Sciatic nerve (tissue), 2 donors: ENCODE measurements at regions of chr2 and their contacts with region 1.

Region 1: DNA sequence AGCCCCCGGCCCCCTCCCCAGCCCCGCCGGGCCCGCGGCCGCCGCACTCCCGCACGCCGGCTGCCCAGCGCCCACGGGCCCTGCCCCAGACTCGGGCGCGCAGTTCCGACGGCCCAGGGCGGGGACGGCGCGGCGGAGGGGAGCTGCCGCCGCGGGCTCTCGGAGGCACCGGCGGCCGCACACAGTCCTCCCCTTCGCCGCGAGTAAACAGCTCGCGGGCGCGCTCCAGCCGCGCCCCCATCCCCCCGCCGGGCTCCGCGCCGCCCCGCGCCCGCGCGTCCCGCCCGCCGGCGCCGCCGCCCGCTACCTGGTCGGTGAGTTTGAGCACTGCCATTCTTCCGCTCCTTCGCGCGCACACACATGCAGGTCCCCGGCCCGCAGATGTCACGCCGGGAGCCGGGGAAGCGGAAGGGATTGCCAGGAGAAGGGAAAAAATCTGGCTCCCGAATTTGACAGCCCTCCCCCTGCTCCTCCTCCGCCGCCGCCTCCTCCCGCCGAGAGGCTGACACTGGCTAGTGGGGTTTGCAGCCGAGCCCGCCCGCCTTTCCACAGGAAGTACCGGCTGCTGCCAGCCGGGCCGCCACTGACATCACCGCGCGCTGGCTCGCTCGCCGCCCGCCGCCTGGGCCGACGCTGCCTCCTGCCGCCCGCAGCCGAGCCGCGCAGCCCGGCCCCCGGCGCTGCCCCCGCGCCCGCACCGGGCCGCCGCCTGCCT is at the start of gene ANKRD44:
- DNase-seq: peak; percentile 94
- ATAC-seq: peak; percentile 96
- total RNA-seq, gene ANKRD44: 77.8 TPM

Region 2: DNA sequence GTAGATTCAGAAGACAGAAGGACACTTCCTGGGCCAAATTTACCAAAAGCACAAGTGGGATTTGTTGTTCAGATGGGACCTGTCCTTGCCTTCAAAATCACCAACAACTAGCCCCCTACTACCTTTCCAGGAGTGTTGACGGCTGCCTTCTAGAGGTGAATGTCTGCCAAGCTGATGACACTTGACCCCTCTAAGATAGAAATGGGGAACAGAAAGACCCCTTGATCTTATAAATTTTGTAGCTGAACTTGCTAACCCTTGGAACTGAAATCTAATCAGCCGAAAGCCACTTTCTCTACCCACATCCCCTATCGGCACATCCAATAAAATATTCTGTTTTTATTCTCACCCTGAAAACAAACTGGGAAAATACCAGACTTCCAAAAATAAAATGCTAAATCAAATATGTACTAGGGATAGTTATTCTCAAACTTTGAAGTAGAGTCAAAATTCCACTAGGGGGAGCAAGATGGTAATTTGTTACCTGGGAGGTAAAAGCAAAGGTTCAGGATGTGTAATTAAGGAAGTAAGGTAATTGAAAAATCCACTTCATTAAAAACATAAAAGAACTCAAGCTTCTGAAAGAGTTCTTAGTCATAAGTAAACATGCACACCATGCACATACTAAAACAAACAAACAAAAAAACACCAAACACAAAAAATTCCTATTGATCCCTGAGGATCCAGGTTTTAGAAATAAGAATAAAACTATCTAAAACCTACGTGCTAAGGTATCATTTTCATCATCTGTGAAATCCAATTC is 119.1 kb before region 1 on chr2:
- intact Hi-C with region 1: loop called (anchors 10 kb)
- DNase-seq: no peak
- ATAC-seq: peak; percentile 50